ENCODE measurements at regions of chr2 and their contacts with region 1.

Region 1: GRCh38 chr2:29309090-29310029 is 194.1 kb downstream of the CLIP4 start:
- DNase-seq: peak; percentile 51
- ATAC-seq: peak; percentile 96
- H3K4me3 Mint-ChIP-seq: no peak overlapping the region
- H3K27ac Mint-ChIP-seq: 0 out of 2 replicates have a peak overlapping the region, but pooled peaks have one; percentile 31
- H3K4me1 Mint-ChIP-seq: peaks cover 13% of the 10 kb centered on the region
- H3K27me3 Mint-ChIP-seq: no peaks in the 10 kb centered on the region
- CTCF ChIP-seq: peak; percentile 71

Region 2: DNA sequence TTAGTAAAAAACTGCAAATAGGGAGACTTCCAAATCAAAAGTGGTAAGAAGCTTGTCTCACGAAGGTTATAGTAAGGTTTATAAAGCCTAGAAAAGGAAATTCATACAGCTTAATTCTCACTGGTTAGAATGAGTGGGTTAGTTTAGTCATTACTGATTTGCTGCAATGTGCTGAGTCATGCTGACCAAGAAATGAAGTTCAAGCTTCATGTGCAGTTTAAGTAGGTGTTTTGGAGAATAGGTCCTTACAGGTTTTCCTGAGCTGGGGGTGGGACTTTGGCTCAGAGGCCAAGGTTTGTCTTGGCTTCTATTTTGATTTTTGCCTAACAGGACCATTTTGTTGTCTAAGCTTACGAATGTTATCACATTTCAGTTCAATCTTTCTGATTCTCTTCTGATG is 179.1 kb before region 1 on chr2:
- CTCF ChIA-PET with region 1: no interaction called
- POLR2A ChIA-PET with region 1: no interaction called
- DNase-seq: no peak
- ATAC-seq: no peak; the same call in 1 of the 2 replicates
- H3K4me3 Mint-ChIP-seq: no peak overlapping the region
- H3K27ac Mint-ChIP-seq: no peak overlapping the region
- H3K4me1 Mint-ChIP-seq: peaks cover 15% of the 10 kb centered on the region
- H3K27me3 Mint-ChIP-seq: no peaks in the 10 kb centered on the region; the same call in 1 of the 2 replicates
- CTCF ChIP-seq: no peak

Region 3: GRCh38 chr2:29238497-29238896 is 70.9 kb before region 1 on chr2:
- CTCF ChIA-PET with region 1: interaction called, 13 read pairs
- POLR2A ChIA-PET with region 1: no interaction called
- DNase-seq: peak; percentile 69
- ATAC-seq: peak; percentile 98
- H3K4me3 Mint-ChIP-seq: no peak overlapping the region
- H3K27ac Mint-ChIP-seq: no peak overlapping the region
- H3K4me1 Mint-ChIP-seq: no peaks in the 10 kb centered on the region
- H3K27me3 Mint-ChIP-seq: no peaks in the 10 kb centered on the region; the same call in 1 of the 2 replicates
- CTCF ChIP-seq: peak; percentile 67

Region 4: GRCh38 chr2:29290293-29291047 is 18.9 kb before region 1 on chr2:
- CTCF ChIA-PET with region 1: interaction called, 25 read pairs
- POLR2A ChIA-PET with region 1: no interaction called
- DNase-seq: peak; percentile 57
- ATAC-seq: peak; percentile 87
- H3K4me3 Mint-ChIP-seq: no peak overlapping the region
- H3K27ac Mint-ChIP-seq: peak overlapping the region; percentile 88
- H3K4me1 Mint-ChIP-seq: peaks cover 27% of the 10 kb centered on the region
- H3K27me3 Mint-ChIP-seq: no peaks in the 10 kb centered on the region
- CTCF ChIP-seq: no peak

Region 5: DNA sequence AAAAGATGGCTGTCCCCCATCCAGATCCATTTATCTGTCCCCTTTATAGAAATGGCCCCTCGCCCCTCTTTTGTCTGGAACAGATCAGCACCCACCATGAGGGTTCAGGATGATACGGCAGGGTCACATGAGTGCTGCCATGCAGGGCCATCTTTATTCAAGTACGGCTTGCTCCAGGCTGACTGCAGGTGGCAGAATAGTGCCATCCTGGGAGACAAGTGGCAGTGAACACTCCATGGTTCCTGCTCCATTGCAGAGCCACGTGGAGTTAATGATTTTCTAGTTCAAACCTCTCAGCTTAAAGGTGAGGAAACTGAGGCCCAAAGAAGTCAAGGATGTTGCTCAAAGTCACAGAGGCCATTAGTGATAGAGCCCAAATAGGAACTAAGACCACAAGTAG is 13.5 kb before region 1 on chr2:
- CTCF ChIA-PET with region 1: interaction called, 25 read pairs
- POLR2A ChIA-PET with region 1: no interaction called
- DNase-seq: peak; percentile 38
- ATAC-seq: peak; percentile 62; the same call in 1 of the 2 replicates
- H3K4me3 Mint-ChIP-seq: no peak overlapping the region
- H3K27ac Mint-ChIP-seq: no peak overlapping the region
- H3K4me1 Mint-ChIP-seq: peaks cover 6% of the 10 kb centered on the region
- H3K27me3 Mint-ChIP-seq: no peaks in the 10 kb centered on the region; the same call in 1 of the 2 replicates
- CTCF ChIP-seq: no peak

Region 6: GRCh38 chr2:29326926-29327325 is 17.6 kb after region 1 on chr2:
- CTCF ChIA-PET with region 1: interaction called, 14 read pairs
- POLR2A ChIA-PET with region 1: no interaction called
- DNase-seq: no peak
- ATAC-seq: no peak
- H3K4me3 Mint-ChIP-seq: no peak overlapping the region
- H3K27ac Mint-ChIP-seq: no peak overlapping the region
- H3K4me1 Mint-ChIP-seq: no peaks in the 10 kb centered on the region
- H3K27me3 Mint-ChIP-seq: no peaks in the 10 kb centered on the region
- CTCF ChIP-seq: no peak

Region 7: GRCh38 chr2:29361231-29361630 is 51.9 kb after region 1 on chr2:
- CTCF ChIA-PET with region 1: interaction called, 10 read pairs
- POLR2A ChIA-PET with region 1: no interaction called
- DNase-seq: no peak
- ATAC-seq: no peak
- H3K4me3 Mint-ChIP-seq: no peak overlapping the region
- H3K27ac Mint-ChIP-seq: no peak overlapping the region
- H3K4me1 Mint-ChIP-seq: peaks cover 9% of the 10 kb centered on the region
- H3K27me3 Mint-ChIP-seq: no peaks in the 10 kb centered on the region; the same call in 1 of the 2 replicates
- CTCF ChIP-seq: no peak